Activated B cell treated with CpG ODN at 0.5 μM for 24 hours (primary cell): ENCODE measurements at regions of chr2 and their contacts with region 1.

Region 1: DNA sequence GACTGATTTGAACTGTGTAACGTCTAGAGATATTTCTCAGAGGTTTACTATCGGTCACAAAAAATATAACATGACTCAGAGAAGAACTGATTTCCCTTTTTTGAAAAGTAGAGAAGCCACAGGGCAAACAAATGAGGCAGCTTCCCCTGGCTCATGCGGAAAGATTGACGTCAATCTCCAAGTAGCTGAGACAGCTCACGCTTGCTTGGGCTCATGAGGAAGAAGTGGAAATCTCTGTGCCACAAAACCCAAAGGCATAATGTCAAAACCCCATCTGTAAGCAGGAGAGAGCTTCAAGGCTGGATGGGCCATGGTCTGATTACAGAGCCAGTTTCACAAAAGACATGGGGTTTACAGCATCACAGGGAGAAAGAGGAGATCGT is 188.1 kb downstream of the ARL4C start:
- DNase-seq: peak; percentile 43
- ATAC-seq: peak; percentile 93
- H3K4me3 Mint-ChIP-seq: peak overlapping the region; percentile 50
- H3K27ac Mint-ChIP-seq: peak overlapping the region; percentile 74
- H3K4me1 Mint-ChIP-seq: peaks cover 35% of the 10 kb centered on the region
- H3K27me3 Mint-ChIP-seq: peaks cover 33% of the 10 kb centered on the region
- CTCF ChIP-seq: no peak

Region 2: DNA sequence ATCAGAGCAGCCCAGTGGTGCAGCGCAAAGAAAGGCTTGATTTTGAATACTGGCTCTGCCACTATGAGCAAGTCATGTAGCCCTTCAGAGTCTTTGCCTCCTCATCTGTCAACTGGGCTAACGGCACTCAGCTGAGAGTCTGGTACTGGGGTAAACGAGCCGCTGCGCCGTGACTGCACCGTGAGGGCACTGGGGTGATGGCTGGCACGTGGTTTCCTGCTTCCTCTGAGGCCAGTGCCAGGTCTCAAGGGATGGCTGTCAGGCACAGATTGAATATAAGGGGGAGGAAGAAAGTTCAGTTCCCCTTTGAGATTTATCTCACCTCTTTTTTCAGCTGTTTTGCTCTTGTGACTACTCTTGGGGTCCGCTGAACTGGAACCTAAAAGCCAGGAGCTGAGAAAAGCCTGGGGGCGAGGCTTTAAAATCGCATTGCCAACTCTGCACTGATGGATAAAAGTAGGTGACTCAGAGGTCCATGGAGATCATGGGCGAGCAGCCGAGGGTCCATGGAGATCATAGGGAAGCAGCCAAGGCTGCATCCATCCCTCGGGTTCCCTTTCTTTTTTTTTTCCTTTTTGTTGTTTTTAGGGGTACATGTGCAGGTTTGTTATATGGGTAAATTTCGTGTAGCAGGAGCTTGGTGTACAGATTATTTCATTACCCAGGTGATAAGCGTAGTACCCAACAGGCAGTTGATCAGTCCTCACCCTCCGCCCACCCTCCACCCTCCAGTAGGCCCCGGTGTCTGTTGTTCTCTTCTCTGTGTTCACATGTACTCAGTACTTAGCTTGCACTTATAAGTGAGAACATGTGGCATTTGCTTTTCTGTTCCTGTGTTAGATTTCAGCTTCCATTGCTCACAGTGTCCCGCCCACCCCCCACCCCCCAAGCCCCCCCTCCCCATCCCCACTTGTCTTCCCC is 144.1 kb before region 1 on chr2:
- CTCF ChIA-PET with region 1: interaction called, 3 read pairs
- POLR2A ChIA-PET with region 1: interaction called, 7 read pairs
- intact Hi-C with region 1: loop called (anchors 1 kb)
- DNase-seq: peak; percentile 62
- ATAC-seq: peak; percentile 97
- H3K4me3 Mint-ChIP-seq: peak overlapping the region; percentile 48
- H3K27ac Mint-ChIP-seq: peak overlapping the region; percentile 74
- H3K4me1 Mint-ChIP-seq: peaks cover 54% of the 10 kb centered on the region
- H3K27me3 Mint-ChIP-seq: peaks cover 3% of the 10 kb centered on the region
- CTCF ChIP-seq: no peak

Region 3: GRCh38 chr2:234355021-234355720 is 46.4 kb after region 1 on chr2:
- CTCF ChIA-PET with region 1: no interaction called
- POLR2A ChIA-PET with region 1: no interaction called
- intact Hi-C with region 1: no loop called
- DNase-seq: no peak
- ATAC-seq: peak; percentile 34
- H3K4me3 Mint-ChIP-seq: peak overlapping the region; percentile 46
- H3K27ac Mint-ChIP-seq: no peak overlapping the region
- H3K4me1 Mint-ChIP-seq: peaks cover 21% of the 10 kb centered on the region
- H3K27me3 Mint-ChIP-seq: peaks cover 4% of the 10 kb centered on the region
- CTCF ChIP-seq: no peak

Region 4: GRCh38 chr2:234446404-234447076 is 137.7 kb after region 1 on chr2:
- CTCF ChIA-PET with region 1: no interaction called
- POLR2A ChIA-PET with region 1: interaction called, 8 read pairs
- intact Hi-C with region 1: loop called (anchors 1 kb)
- DNase-seq: peak; percentile 68
- ATAC-seq: peak; percentile 93
- H3K4me3 Mint-ChIP-seq: peak overlapping the region; percentile 66
- H3K27ac Mint-ChIP-seq: peak overlapping the region; percentile 96
- H3K4me1 Mint-ChIP-seq: peaks cover 83% of the 10 kb centered on the region
- H3K27me3 Mint-ChIP-seq: no peaks in the 10 kb centered on the region
- CTCF ChIP-seq: no peak

Region 5: DNA sequence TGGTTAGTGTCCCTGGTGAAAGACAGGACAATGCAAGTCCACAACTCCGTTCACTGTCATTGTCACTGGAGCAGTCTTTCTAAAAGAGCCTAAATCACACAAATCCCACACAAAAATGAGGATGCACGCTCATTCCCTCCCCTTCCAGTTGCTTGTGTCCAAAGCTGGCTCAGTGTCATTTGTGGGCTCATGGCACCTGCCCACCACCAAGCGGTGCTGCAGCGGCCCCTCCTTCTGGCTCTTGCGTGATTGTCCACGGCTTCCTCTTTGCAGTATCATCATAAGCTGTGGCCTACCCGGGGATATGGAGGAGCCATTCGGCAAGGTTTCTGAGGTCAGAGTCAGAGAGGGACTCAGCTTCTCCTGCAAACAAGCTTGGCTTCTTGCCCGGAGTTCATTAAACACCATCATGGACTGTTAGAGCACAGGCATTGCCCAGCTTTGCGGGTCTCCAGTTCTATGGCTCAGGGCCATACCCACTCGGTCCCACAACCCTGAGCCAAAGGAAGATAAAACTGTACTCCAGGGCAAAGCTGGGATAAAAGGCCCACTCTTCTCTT is 1005.6 kb after region 1 on chr2:
- CTCF ChIA-PET with region 1: no interaction called
- POLR2A ChIA-PET with region 1: no interaction called
- intact Hi-C with region 1: no loop called
- DNase-seq: no peak
- ATAC-seq: no peak
- H3K4me3 Mint-ChIP-seq: no peak overlapping the region
- H3K27ac Mint-ChIP-seq: no peak overlapping the region
- H3K4me1 Mint-ChIP-seq: no peaks in the 10 kb centered on the region
- H3K27me3 Mint-ChIP-seq: peaks cover 2% of the 10 kb centered on the region
- CTCF ChIP-seq: no peak